ENCODE measurements at regions of chr16 and their contacts with region 1.

Region 1: DNA sequence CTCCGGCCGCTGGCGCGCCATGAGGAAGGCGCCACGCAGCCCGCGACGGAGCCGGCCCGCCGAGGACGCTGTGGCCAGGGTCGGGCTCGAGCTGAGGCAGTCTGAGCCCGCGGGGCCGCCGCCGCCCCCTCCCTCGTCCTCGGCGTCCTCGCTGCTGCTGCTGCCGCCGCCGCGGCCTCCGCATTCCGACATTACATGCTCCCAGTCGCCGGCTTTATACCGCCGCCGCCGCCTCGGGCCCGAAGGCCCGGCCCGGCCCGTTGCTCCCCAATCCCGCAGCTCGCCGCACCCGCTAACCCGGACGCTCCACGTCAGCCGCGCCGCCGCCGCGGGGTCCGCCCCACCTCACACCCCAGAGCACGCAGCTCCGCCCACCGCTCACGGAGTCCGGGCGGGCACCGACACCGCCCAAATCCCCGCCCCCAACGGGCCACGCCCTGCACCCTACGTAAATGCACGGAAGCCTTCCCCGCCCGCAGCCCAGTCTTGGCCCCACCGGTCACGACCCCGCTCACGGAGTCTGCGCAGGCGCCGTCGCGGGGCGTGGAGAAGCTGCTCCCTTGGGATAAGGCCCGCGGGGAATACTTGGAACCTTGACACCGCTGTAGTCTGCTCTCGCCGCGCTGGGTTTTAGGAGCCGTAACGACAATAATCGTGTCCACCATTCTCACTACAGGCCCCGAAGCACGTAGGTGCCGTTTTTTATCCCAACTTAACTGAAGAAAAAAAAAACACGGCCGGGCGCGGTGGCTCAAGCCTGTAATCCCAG is at the start of gene TXNDC11:
- DNase-seq: peak; percentile 98
- H3K4me3 ChIP-seq: peak within 1 kb of the TSS; percentile 97
- H3K27ac ChIP-seq: peak within 1 kb of the TSS; percentile 67
- H3K4me1 ChIP-seq: peaks cover 48% of the 10 kb centered on the region
- CTCF ChIP-seq: no peak
- total RNA-seq, gene TXNDC11: 79.8 and 96.0 TPM in 2 replicates

Region 2: GRCh38 chr16:11689031-11689761 is 53.5 kb before region 1 on chr16:
- CTCF ChIA-PET with region 1: no interaction called
- POLR2A ChIA-PET with region 1: interaction called, 5 read pairs
- intact Hi-C with region 1: loop called (anchors 2 kb)
- DNase-seq: peak; percentile 91
- H3K4me3 ChIP-seq: peak overlapping the region; percentile 65
- H3K27ac ChIP-seq: peak overlapping the region; percentile 98
- H3K4me1 ChIP-seq: peaks cover 80% of the 10 kb centered on the region
- CTCF ChIP-seq: no peak

Region 3: GRCh38 chr16:11759163-11759834 is 16.6 kb after region 1 on chr16:
- CTCF ChIA-PET with region 1: no interaction called
- POLR2A ChIA-PET with region 1: interaction called, 10 read pairs
- intact Hi-C with region 1: no loop called
- DNase-seq: no peak
- H3K4me3 ChIP-seq: no peak overlapping the region
- H3K27ac ChIP-seq: no peak overlapping the region
- H3K4me1 ChIP-seq: peaks cover 4% of the 10 kb centered on the region
- CTCF ChIP-seq: no peak

Region 4: DNA sequence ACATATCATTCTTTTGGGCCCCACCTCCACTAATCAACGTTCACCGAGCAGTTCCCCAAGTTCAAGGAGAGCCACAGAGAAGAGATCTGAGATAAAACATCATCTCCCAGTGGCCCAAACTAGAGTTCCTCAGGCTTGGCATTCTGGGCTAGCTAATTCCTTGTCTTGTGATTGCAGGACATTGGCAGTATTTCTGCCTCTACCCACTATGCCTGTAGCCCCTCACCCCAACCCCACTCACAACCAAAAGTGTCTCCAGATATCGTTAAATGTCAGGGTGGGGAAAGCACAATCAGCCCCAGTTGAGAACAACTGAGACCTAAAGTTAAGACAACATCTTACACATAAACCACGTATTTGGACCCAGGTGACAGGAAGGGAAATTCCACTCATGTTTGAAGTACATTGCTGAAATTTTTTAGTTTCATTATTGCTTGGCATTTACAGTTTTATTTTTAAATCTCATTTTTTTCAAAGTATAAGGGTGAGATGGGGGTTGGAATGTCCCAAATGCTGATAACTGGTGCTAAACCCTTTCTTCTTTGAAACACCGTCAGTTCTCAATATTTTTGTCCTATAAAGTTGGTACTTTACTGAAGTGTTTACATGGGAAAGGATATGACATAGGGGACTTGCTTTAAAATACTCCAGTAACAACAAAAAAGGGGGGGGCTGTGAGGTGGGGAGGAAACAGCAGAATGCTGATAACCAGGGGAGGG is 40.8 kb after region 1 on chr16:
- CTCF ChIA-PET with region 1: no interaction called
- POLR2A ChIA-PET with region 1: interaction called, 10 read pairs
- intact Hi-C with region 1: loop called (anchors 5 kb)
- DNase-seq: peak; percentile 47
- H3K4me3 ChIP-seq: peak overlapping the region; percentile 53
- H3K27ac ChIP-seq: peak overlapping the region; percentile 85
- H3K4me1 ChIP-seq: peaks cover 63% of the 10 kb centered on the region
- CTCF ChIP-seq: no peak

Region 5: GRCh38 chr16:11797166-11797956 is 54.6 kb after region 1 on chr16 and contains the start of gene ZC3H7A:
- CTCF ChIA-PET with region 1: interaction called, 7 read pairs
- POLR2A ChIA-PET with region 1: interaction called, 8 read pairs
- intact Hi-C with region 1: loop called (anchors 2 kb)
- DNase-seq: peak; percentile 98
- H3K4me3 ChIP-seq: peak within 1 kb of the TSS; percentile 92
- H3K27ac ChIP-seq: peak within 1 kb of the TSS; percentile 79
- H3K4me1 ChIP-seq: peaks cover 62% of the 10 kb centered on the region
- CTCF ChIP-seq: peak; percentile 66
- total RNA-seq, gene ZC3H7A: 28.6 and 32.1 TPM in 2 replicates

Region 6: DNA sequence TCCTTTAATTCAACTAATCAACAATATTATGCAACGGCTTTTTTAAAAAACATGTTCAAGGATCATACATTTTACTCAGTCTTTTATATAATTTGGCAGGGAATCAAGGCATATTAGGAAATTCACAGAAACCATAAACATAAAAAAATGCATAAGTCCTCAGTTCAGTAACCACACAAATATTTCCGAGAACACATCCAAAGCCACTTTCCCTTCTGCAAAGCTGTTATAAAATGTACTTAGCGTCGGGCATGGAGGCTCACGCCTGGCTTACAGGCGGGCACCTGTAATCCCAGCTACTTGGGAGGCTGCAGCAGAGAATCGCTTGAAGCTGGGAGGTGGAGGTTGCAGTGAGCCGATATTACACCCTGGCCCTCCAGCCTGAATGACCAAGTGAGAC is 64.0 kb after region 1 on chr16:
- CTCF ChIA-PET with region 1: no interaction called
- POLR2A ChIA-PET with region 1: interaction called, 3 read pairs
- intact Hi-C with region 1: loop called (anchors 5 kb)
- DNase-seq: no peak
- H3K4me3 ChIP-seq: no peak overlapping the region
- H3K27ac ChIP-seq: no peak overlapping the region
- H3K4me1 ChIP-seq: peaks cover 8% of the 10 kb centered on the region
- CTCF ChIP-seq: no peak

Region 7: GRCh38 chr16:12188061-12188934 is 445.6 kb after region 1 on chr16:
- CTCF ChIA-PET with region 1: no interaction called
- POLR2A ChIA-PET with region 1: no interaction called
- intact Hi-C with region 1: no loop called
- DNase-seq: no peak
- H3K4me3 ChIP-seq: no peak overlapping the region
- H3K27ac ChIP-seq: no peak overlapping the region
- H3K4me1 ChIP-seq: peaks cover 4% of the 10 kb centered on the region
- CTCF ChIP-seq: no peak

Measured in OCI-LY7 (cell line).